ENCODE measurements at regions of chr3 and their contacts with region 1.

Region 1: DNA sequence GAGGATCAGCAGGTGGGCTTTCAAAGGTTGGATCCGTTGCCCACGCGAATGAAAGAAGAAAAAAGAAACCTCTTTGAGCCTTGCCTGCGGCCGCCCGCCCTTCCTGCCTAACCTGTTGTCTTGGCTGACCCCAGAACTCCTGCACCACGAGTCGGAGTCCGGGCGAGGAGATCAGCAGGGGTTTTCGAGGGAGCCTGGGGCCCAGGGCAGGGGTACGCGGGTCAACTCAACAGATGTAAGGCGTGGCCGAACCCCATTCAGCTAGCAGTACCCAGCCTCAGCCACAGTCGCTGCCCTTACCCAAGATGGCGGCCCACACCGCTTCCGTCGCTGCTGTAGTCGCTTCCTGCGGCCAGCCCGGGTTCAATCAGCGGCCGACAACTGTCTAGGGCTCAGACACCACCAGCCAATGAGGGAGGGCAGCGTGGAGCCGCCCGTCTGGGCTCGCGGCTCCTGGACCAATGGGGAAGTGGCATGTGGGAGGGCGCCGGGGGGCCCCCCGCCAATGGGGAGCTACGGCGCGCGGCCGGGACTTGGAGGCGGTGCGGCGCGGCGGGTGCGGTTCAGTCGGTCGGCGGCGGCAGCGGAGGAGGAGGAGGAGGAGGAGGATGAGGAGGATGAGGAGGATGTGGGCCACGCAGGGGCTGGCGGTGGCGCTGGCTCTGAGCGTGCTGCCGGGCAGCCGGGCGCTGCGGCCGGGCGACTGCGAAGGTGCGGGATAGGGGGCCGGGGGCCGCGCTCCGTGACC is at the start of gene MANF:
- DNase-seq: peak; percentile 87 to 98 (median 98)
- ATAC-seq: peak; percentile 97
- H3K4me3 ChIP-seq: peak within 1 kb of the TSS; percentile 92
- H3K4me3 Mint-ChIP-seq: peak within 1 kb of the TSS; percentile 89 to 99 (median 98)
- H3K27ac ChIP-seq: peak within 1 kb of the TSS; percentile 98
- H3K27ac Mint-ChIP-seq: peak within 1 kb of the TSS; percentile 98 to 99 (median 99)
- H3K4me1 ChIP-seq: peaks cover 22 to 31% of the 10 kb centered on the region in 2 donors
- H3K4me1 Mint-ChIP-seq: peaks cover 32 to 48% (median 46%) of the 10 kb centered on the region in 7 donors
- H3K27me3 ChIP-seq: no peaks in the 10 kb centered on the region
- H3K27me3 Mint-ChIP-seq: no peaks in the 10 kb centered on the region
- total RNA-seq, gene MANF: 28.2 to 182 (median 68.0) TPM

Region 2: DNA sequence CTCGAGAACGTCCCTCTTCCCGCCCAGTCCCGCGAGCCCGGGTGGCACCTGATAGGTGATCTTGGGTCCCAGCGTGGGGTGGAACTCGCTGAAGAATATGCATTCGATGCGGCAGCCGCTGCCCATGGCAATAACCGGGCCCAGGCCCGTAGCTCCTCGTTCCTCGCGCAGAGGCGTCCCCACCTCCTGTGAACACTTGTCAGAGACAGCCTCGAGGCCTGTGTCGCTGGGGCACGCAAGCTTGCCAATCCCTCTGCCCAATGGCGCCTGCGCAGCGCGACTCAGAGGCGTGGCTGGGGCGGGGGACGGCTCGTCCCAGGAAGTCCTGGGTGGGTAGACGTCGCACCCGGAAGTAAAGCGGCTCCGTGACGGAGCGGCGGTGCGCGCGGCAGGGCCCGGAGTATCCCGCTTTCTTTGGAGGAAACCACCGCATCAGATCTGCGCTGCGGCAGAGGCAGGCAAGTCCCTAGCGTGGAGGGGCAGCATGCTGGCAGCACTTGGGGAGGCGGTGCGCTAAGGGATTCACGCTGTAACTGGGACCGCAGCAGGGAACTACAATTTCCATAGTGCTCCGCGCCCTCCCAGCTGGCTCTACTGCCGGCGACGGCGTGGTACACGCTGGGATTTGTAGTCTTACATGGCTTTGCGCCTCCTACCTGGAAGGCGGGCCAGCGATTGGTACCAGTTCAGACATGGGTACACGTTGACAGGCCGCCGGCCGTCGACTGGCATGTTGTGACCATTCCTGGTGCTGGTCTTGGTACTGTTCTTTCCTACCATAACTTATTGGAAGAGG is 1034.2 kb before region 1 on chr3 and contains the starts of genes CYB561D2 and NPRL2:
- CTCF ChIA-PET with region 1: no interaction called
- POLR2A ChIA-PET with region 1: no interaction called
- intact Hi-C with region 1: loop called in 1 of 2 experiments (anchors 2 kb)
- DNase-seq: peak; percentile 97 to 100 (median 99)
- ATAC-seq: peak; percentile 95
- H3K4me3 ChIP-seq: peak within 1 kb of the TSS; percentile 90
- H3K4me3 Mint-ChIP-seq: peak within 1 kb of the TSS; percentile 86 to 99 (median 96)
- H3K27ac ChIP-seq: peak within 1 kb of the TSS; percentile 93
- H3K27ac Mint-ChIP-seq: peak within 1 kb of the TSS; percentile 96 to 100 (median 99)
- H3K4me1 ChIP-seq: peaks cover 26 to 32% of the 10 kb centered on the region in 2 donors
- H3K4me1 Mint-ChIP-seq: peaks cover 24 to 78% (median 59%) of the 10 kb centered on the region in 7 donors
- H3K27me3 ChIP-seq: no peaks in the 10 kb centered on the region
- H3K27me3 Mint-ChIP-seq: no peaks in the 10 kb centered on the region
- total RNA-seq, gene CYB561D2: 23.3 to 42.6 (median 32.8) TPM
- total RNA-seq, gene NPRL2: 35.3 to 48.9 (median 47.7) TPM

Region 3: GRCh38 chr3:50840983-50841489 is 543.9 kb before region 1 on chr3:
- CTCF ChIA-PET with region 1: no interaction called
- POLR2A ChIA-PET with region 1: no interaction called
- intact Hi-C with region 1: no loop called
- DNase-seq: no peak
- ATAC-seq: no peak
- H3K4me3 ChIP-seq: no peak overlapping the region
- H3K4me3 Mint-ChIP-seq: no peak overlapping the region
- H3K27ac ChIP-seq: no peak overlapping the region
- H3K27ac Mint-ChIP-seq: no peak overlapping the region
- H3K4me1 ChIP-seq: no peaks in the 10 kb centered on the region
- H3K4me1 Mint-ChIP-seq: no peaks in the 10 kb centered on the region
- H3K27me3 ChIP-seq: peaks cover 0 to 4% of the 10 kb centered on the region in 2 donors
- H3K27me3 Mint-ChIP-seq: peaks cover 0 to 23% (median 11%) of the 10 kb centered on the region in 5 donors

Region 4: GRCh38 chr3:50971487-50971924 is 413.4 kb before region 1 on chr3:
- CTCF ChIA-PET with region 1: interaction called, 5 read pairs
- POLR2A ChIA-PET with region 1: no interaction called
- intact Hi-C with region 1: loop called in 1 of 2 experiments (anchors 5 kb)
- DNase-seq: peak in 8 of 9 donors; percentile 37 to 83 (median 78)
- ATAC-seq: peak; percentile 99
- H3K4me3 ChIP-seq: no peak overlapping the region
- H3K4me3 Mint-ChIP-seq: peak overlapping the region in 2 of 10 donors; percentile 15 to 45
- H3K27ac ChIP-seq: no peak overlapping the region
- H3K27ac Mint-ChIP-seq: peak overlapping the region in 7 of 9 donors; percentile 12 to 77 (median 67)
- H3K4me1 ChIP-seq: peaks cover 9 to 14% of the 10 kb centered on the region in 2 donors
- H3K4me1 Mint-ChIP-seq: peaks cover 0 to 21% (median 13%) of the 10 kb centered on the region in 7 donors
- H3K27me3 ChIP-seq: no peaks in the 10 kb centered on the region
- H3K27me3 Mint-ChIP-seq: peaks cover 0 to 3% (median 0%) of the 10 kb centered on the region in 5 donors

Region 5: DNA sequence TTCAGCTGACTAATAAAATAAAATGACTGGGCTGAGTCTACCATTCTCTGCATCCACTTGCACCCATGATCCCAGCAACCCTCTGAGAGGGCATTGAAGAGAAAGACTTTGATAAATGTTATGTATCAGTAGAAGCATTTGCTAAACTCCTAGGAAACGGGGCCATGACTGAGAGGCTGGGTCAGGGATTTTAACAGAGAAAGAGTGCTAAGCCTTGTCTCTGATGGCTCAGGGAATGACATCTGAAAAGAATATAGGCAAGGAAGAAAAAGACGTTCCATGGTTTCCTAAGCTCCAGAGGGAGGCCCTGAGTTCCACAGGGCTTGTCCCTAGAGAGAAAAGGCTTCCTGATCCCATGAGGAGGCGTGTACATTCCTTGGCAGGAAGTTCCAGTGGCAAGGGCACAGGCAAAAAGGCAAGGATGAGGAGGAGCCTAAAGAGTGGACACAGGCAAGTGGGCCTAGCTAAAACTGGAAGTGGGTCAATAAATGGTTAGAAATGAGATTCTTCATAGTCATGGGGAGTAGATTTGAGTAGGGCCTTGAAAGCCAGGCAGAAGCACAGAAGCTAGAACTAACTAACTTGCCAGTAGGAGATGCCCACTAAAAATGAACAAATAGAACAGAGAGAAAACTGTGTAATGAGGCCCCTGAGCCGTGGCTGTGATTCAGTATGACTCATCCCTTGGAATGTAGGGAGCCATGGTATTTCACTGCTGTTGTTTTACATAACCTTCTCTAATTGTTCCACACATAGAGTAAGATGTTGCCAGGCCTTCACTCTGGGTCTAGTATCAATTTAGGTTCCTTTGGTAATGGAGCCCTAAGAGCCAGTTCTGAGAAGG is 44.7 kb before region 1 on chr3:
- CTCF ChIA-PET with region 1: no interaction called
- POLR2A ChIA-PET with region 1: no interaction called
- intact Hi-C with region 1: no loop called
- DNase-seq: no peak
- ATAC-seq: no peak
- H3K4me3 ChIP-seq: no peak overlapping the region
- H3K4me3 Mint-ChIP-seq: no peak overlapping the region
- H3K27ac ChIP-seq: no peak overlapping the region
- H3K27ac Mint-ChIP-seq: no peak overlapping the region
- H3K4me1 ChIP-seq: no peaks in the 10 kb centered on the region
- H3K4me1 Mint-ChIP-seq: no peaks in the 10 kb centered on the region
- H3K27me3 ChIP-seq: no peaks in the 10 kb centered on the region
- H3K27me3 Mint-ChIP-seq: no peaks in the 10 kb centered on the region

Region 6: GRCh38 chr3:51434746-51435327 is 49.9 kb after region 1 on chr3:
- CTCF ChIA-PET with region 1: interaction called, 13 read pairs
- POLR2A ChIA-PET with region 1: no interaction called
- intact Hi-C with region 1: loop called (anchors 1 kb)
- DNase-seq: peak in 8 of 9 donors; percentile 26 to 64 (median 52)
- ATAC-seq: peak; percentile 90
- H3K4me3 ChIP-seq: no peak overlapping the region
- H3K4me3 Mint-ChIP-seq: no peak overlapping the region
- H3K27ac ChIP-seq: no peak overlapping the region
- H3K27ac Mint-ChIP-seq: peak overlapping the region in 6 of 9 donors; percentile 16 to 59 (median 34)
- H3K4me1 ChIP-seq: no peaks in the 10 kb centered on the region
- H3K4me1 Mint-ChIP-seq: peaks cover 5 to 13% (median 10%) of the 10 kb centered on the region in 7 donors
- H3K27me3 ChIP-seq: no peaks in the 10 kb centered on the region
- H3K27me3 Mint-ChIP-seq: no peaks in the 10 kb centered on the region

Region 7: DNA sequence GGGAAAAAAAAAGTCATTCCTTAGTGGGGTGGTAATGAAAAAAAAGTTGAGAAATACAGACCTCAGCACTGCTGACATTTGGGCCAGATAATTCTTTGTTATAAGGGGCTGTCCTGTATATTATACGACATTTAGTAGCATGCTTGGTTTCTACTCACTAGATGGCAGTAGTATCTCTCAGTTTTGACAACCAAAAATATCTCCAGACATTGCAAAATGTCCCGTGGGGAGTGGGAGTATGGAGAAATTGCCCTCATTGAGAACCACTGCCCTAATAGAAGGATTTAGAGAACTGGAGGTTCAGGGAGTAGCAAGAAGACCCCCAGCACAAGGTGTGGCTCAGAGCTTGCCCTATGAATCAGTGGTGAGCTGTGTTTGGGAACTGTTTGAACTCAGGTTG is 257.6 kb after region 1 on chr3:
- CTCF ChIA-PET with region 1: no interaction called
- POLR2A ChIA-PET with region 1: no interaction called
- intact Hi-C with region 1: no loop called
- DNase-seq: peak in 4 of 9 donors; percentile 9 to 26 (median 11)
- ATAC-seq: peak; percentile 48
- H3K4me3 ChIP-seq: no peak overlapping the region
- H3K4me3 Mint-ChIP-seq: no peak overlapping the region
- H3K27ac ChIP-seq: no peak overlapping the region
- H3K27ac Mint-ChIP-seq: peak overlapping the region in 2 of 9 donors; percentile 22 to 31
- H3K4me1 ChIP-seq: no peaks in the 10 kb centered on the region
- H3K4me1 Mint-ChIP-seq: peaks cover 0 to 3% (median 0%) of the 10 kb centered on the region in 7 donors
- H3K27me3 ChIP-seq: no peaks in the 10 kb centered on the region
- H3K27me3 Mint-ChIP-seq: no peaks in the 10 kb centered on the region

Region 8: DNA sequence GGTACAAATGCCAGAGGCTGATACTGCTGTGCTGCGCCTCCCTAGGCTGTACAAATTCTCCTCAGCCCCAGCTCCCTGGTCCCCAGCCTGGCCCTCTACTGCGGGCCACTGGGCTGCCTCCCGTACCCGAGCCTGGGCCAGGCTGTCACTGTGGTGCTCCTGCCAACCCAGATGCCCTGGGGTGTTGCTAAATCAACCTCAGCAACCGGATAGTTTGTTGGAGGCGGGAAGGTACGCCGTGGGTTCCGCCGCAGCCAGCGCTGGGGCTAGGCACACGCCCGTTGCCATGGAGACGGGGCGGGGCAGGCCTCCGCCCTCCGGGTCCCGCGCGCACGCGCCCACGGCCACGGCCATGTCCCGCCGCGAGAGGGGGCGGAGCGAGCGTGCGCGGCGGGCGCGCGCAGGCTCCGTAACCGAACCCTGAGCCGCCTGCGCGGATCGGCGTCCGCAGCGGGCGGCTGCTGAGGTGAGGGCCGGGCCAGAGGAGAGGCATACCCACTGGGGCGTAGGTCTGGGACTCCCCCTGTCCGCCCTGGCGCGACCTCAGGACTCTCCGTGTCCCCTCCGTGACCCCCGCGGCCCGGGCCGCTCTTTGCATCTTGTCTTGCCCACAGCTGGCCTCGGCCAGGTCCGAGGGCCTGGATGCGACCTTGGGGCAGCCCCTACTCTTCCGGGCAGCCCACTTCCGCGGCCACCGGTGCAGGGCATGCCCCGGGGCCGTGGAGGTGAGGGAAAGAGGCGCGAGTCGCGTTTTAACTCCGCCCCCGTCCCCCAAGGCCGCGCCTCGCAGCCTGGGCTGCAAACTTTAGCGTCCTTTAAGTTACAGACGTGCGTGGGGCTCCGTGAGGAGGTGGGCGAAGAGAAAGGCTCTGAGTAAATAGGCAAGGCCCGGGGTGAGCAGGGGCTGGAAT is 286.2 kb after region 1 on chr3 and contains the start of gene TEX264:
- CTCF ChIA-PET with region 1: no interaction called
- POLR2A ChIA-PET with region 1: interaction called, 4 read pairs
- intact Hi-C with region 1: loop called (anchors 1 kb)
- DNase-seq: peak; percentile 90 to 98 (median 95)
- ATAC-seq: peak; percentile 90
- H3K4me3 ChIP-seq: peak within 1 kb of the TSS; percentile 94
- H3K4me3 Mint-ChIP-seq: peak within 1 kb of the TSS; percentile 89 to 95 (median 92)
- H3K27ac ChIP-seq: peak within 1 kb of the TSS; percentile 85
- H3K27ac Mint-ChIP-seq: peak within 1 kb of the TSS; percentile 24 to 97 (median 93)
- H3K4me1 ChIP-seq: peaks cover 53 to 60% of the 10 kb centered on the region in 2 donors
- H3K4me1 Mint-ChIP-seq: peaks cover 59 to 82% (median 73%) of the 10 kb centered on the region in 7 donors
- H3K27me3 ChIP-seq: no peaks in the 10 kb centered on the region
- H3K27me3 Mint-ChIP-seq: no peaks in the 10 kb centered on the region
- total RNA-seq, gene TEX264: 34.4 to 65.0 (median 41.7) TPM

Measured in naive thymus-derived CD4-positive, alpha-beta T cell (primary cell).